Sigmoid colon (tissue), 7 donors: ENCODE measurements at regions of chr2 and their contacts with region 1.

Region 1: DNA sequence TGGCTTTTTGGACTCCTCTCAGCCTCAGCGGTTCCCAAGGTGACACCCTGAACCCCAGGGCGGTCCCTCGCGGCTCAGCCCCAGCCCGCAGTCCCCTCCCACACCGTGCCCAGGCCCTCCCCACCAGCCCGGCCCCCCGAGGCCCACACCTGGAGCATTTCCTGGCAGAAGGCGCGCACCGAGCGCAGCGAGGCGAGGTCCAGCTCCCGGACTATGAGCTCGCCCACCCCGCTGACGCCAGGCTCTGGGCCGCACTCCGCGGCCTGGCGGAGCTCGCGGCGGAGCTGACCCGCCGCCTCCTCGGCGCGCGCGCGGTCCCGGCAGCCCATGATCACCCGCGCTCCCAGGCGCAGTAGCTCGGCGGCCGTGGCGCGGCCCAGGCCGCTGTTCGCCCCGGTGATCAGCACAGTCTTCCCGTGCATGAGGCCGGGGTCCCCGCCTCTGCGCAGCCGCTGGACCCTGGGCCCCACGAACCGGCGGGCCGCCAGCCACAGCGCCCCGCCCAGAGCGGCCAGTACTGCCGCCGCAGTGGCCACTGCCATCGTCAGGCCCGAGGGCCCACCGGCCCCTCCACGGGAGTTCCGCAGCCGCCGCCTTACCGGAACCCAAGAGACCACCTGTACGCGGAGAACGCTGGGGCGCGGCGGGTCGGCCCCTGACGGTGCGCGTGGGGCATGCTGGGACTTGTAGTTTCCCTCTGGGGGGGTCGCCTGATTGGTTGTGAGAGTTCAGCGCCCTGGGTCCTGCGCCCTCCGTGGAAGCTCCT is at the start of gene RDH14:
- DNase-seq: peak; percentile 98
- H3K4me3 ChIP-seq: peak within 1 kb of the TSS; percentile 73 to 88 (median 78)
- H3K27ac ChIP-seq: peak within 1 kb of the TSS; percentile 95 to 99 (median 96)
- H3K4me1 ChIP-seq: peaks cover 0 to 32% (median 21%) of the 10 kb centered on the region in 4 donors
- H3K27me3 ChIP-seq: no peaks in the 10 kb centered on the region
- CTCF ChIP-seq: no peak
- EP300 ChIP-seq: no peak
- POLR2A ChIP-seq: peak; percentile 42 to 53
- total RNA-seq, gene RDH14: 37.5 to 45.7 (median 39.9) TPM

Region 2: GRCh38 chr2:19347619-19348562 is 787.7 kb after region 1 on chr2:
- intact Hi-C with region 1: loop called (anchors 5 kb)
- DNase-seq: peak; percentile 99
- H3K4me3 ChIP-seq: peak overlapping the region; percentile 62 to 92 (median 78)
- H3K27ac ChIP-seq: peak overlapping the region; percentile 86 to 96 (median 93)
- H3K4me1 ChIP-seq: peaks cover 0 to 27% (median 25%) of the 10 kb centered on the region in 4 donors
- H3K27me3 ChIP-seq: peaks cover 0 to 21% (median 0%) of the 10 kb centered on the region in 3 donors
- CTCF ChIP-seq: no peak
- EP300 ChIP-seq: peak in 1 of 4 donors; percentile 75
- POLR2A ChIP-seq: peak; percentile 97